ENCODE measurements at regions of chr1 and their contacts with region 1.

Region 1: GRCh38 chr1:22089787-22090186 is 37.3 kb downstream of the CDC42 start:
- DNase-seq: no peak
- ATAC-seq: peak; percentile 89
- H3K4me3 Mint-ChIP-seq: peak overlapping the region; percentile 33
- H3K27ac Mint-ChIP-seq: peak overlapping the region; percentile 66
- H3K4me1 Mint-ChIP-seq: peaks cover 57% of the 10 kb centered on the region
- H3K27me3 Mint-ChIP-seq: no peaks in the 10 kb centered on the region
- CTCF ChIP-seq: no peak

Region 2: DNA sequence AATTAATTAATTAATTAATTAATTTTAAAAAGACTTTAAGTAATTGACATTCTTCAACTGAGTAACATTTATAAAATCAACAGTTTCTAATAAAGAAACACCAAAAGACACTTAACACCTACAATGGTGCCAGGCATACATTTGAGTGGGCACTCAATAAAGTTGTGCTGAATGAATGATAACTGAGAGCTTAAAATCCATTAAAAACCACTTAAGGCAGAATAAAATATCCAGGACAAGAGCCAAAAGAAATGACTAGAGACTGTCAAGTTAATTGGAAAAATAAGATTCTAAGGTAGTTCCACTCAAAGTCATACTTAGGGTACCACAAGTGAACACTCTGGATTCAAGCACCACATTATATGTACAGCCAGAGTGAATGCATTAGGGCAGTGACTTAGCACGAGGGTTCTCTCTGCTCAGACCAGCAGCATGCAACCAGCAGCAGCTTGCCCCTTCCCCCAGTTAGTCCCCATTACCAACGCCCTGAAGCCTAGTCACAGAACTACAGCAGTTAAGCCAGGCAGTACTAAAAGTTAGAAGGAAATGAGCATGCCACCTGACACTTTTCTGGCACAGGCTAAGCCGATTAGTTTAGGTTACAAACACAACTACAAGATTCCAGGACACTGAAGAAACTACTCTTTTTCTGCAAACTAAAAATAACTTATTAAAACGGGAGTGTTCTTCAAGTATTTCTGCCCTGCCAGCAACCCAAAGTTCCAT is 1032.4 kb after region 1 on chr1:
- CTCF ChIA-PET with region 1: no interaction called
- POLR2A ChIA-PET with region 1: interaction called, 11 read pairs
- DNase-seq: no peak
- ATAC-seq: peak; percentile 60
- H3K4me3 Mint-ChIP-seq: no peak overlapping the region
- H3K27ac Mint-ChIP-seq: peak overlapping the region; percentile 8; the same call in 1 of the 2 replicates
- H3K4me1 Mint-ChIP-seq: peaks cover 46% of the 10 kb centered on the region
- H3K27me3 Mint-ChIP-seq: no peaks in the 10 kb centered on the region
- CTCF ChIP-seq: no peak